Caco-2 (cell line): ENCODE measurements at regions of chr20 and their contacts with region 1.

Region 1: DNA sequence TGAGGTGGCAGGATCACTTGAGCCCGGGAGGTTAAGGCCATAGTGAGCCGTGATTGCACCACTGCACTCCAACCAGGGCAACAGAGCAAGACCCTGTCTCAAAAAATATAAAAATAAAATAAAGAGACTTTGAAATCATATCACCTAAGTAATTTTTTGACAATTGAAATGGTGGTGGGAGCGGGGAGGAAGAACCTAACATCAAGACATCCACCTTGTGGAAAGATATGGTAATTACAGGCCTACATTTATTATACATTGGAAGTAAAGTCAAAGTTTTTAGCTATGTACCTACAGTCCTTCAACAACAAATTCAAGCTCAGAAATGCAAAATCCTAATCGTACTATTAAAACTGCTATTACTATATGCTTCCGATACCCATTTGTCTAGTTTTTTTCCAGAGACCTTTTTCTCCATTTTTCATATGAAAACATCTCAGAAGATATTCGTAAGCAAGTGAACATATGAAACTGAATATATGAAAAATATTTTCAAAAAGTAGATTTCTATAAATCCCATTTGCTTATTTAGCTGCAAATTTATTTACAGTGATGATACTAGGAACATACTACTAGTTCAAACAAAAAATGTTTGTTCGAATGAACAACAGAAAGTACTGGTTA is 83.3 kb downstream of the SYCP2 start:
- DNase-seq: peak in 1 of 2 experiments; percentile 59
- H3K4me3 ChIP-seq: no peak overlapping the region
- H3K4me3 Mint-ChIP-seq: no peak overlapping the region
- H3K27ac Mint-ChIP-seq: no peak overlapping the region
- H3K4me1 ChIP-seq: peaks cover 12% of the 10 kb centered on the region
- H3K4me1 Mint-ChIP-seq: peaks cover 13% of the 10 kb centered on the region
- H3K27me3 ChIP-seq: no peaks in the 10 kb centered on the region
- H3K27me3 Mint-ChIP-seq: no peaks in the 10 kb centered on the region
- CTCF ChIP-seq: peak; percentile 62 to 84

Region 2: GRCh38 chr20:59770270-59770669 is 79.9 kb before region 1 on chr20:
- CTCF ChIA-PET with region 1: interaction called, 6 read pairs
- POLR2A ChIA-PET with region 1: no interaction called
- intact Hi-C with region 1: loop called (anchors 1 kb)
- DNase-seq: peak in 1 of 2 experiments; percentile 48
- H3K4me3 ChIP-seq: no peak overlapping the region
- H3K4me3 Mint-ChIP-seq: no peak overlapping the region
- H3K27ac Mint-ChIP-seq: no peak overlapping the region
- H3K4me1 ChIP-seq: no peaks in the 10 kb centered on the region
- H3K4me1 Mint-ChIP-seq: no peaks in the 10 kb centered on the region
- H3K27me3 ChIP-seq: no peaks in the 10 kb centered on the region
- H3K27me3 Mint-ChIP-seq: peaks cover 21% of the 10 kb centered on the region
- CTCF ChIP-seq: peak; percentile 60 to 82

Region 3: DNA sequence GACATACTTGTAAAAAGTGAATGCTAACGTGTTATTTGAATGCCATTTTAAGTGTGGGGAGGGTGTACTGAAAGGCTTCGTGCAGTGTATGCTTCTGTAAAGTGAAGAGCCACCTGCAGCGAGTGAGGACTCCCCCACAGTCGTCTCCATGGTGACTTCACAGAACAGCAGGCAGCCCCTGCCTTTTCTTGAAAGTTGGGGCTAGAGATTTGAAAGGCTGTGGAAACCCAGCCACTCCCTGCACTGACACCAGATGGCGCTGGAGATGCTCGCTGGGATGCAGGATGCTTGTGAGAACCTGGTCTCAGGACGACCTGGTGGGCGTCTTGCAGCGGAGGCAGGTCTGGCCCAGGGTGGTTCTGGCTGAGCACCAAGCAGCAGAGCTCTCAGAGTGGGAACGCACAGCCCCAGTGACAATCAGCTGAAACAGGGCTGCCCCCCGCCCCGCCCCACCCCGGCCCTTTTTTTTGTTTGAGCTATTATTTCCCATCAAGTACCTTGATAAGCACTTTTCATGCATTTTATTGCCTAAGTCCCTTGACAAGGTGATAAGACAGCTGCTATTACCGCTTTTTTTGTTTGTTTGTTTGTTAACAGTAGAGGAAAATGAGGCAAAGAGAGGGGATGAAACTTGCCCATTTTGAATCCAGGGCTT is 67.0 kb before region 1 on chr20:
- CTCF ChIA-PET with region 1: interaction called, 49 read pairs
- POLR2A ChIA-PET with region 1: no interaction called
- intact Hi-C with region 1: loop called (anchors 1 kb)
- DNase-seq: peak; percentile 86 to 88
- H3K4me3 ChIP-seq: no peak overlapping the region
- H3K4me3 Mint-ChIP-seq: no peak overlapping the region
- H3K27ac Mint-ChIP-seq: no peak overlapping the region
- H3K4me1 ChIP-seq: 0 out of 2 replicates have a peak, but pooled peaks cover 3% of the 10 kb centered on the region
- H3K4me1 Mint-ChIP-seq: peaks cover 7% of the 10 kb centered on the region
- H3K27me3 ChIP-seq: no peaks in the 10 kb centered on the region
- H3K27me3 Mint-ChIP-seq: peaks cover 8% of the 10 kb centered on the region
- CTCF ChIP-seq: peak; percentile 99 to 100